GM10248 (cell line): ENCODE measurements at regions of chr13 and their contacts with region 1.

Region 1: GRCh38 chr13:51759240-51759639 is 44.7 kb downstream of the DHRS12 start:
- DNase-seq: no peak
- CTCF ChIP-seq: no peak

Region 2: DNA sequence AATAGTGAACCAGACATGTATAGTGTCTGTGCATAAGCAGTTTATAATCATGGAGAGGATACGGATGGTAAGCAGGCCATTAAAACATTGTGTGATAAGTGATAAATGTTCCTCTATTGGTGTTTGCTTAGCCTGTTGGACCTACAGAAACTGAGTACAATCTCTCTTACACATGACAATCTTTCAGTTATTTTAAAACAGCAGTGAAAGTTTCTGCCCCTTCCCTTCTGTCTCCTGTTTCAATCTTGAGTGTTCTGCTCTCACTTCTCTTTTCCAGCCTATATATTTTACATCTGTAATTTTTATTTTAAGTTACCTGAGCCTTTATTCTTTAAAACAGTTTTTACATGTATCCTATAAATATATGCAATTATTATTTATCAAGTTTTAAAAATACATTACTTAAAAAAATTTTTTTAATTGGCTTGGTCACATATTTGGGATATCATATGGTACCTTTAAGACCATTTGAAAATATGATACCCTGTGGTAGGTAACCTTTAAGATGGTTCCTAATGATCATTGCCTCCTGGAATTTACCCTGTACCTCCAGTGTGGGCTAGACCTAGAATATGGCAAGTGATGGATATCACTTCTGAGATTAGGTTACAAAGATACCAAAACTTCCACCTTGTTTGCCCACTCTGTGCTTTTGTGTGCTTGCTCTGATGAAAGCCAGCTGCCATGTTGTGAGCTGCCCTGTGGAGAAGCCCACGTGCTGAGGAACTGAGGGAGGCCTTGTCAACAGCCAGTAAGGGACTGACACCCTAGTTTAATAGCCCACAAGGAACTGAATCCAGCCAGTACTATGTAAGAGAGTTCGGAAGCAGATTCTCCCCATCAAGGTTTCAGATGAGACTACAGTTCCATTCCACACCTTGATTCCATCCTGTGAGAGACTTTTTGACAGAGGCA is 54.6 kb before region 1 on chr13:
- CTCF ChIA-PET with region 1: no interaction called
- POLR2A ChIA-PET with region 1: no interaction called
- DNase-seq: peak; percentile 45
- CTCF ChIP-seq: no peak

Region 3: GRCh38 chr13:51781246-51782022 is 22.2 kb after region 1 on chr13:
- CTCF ChIA-PET with region 1: interaction called, 10 read pairs
- POLR2A ChIA-PET with region 1: no interaction called
- DNase-seq: peak; percentile 48
- CTCF ChIP-seq: peak; percentile 40

Region 4: GRCh38 chr13:51832471-51833152 is 73.4 kb after region 1 on chr13:
- CTCF ChIA-PET with region 1: no interaction called
- POLR2A ChIA-PET with region 1: no interaction called
- DNase-seq: peak; percentile 56
- CTCF ChIP-seq: peak; percentile 38